ENCODE measurements at regions of chr7 and their contacts with region 1.

Region 1: DNA sequence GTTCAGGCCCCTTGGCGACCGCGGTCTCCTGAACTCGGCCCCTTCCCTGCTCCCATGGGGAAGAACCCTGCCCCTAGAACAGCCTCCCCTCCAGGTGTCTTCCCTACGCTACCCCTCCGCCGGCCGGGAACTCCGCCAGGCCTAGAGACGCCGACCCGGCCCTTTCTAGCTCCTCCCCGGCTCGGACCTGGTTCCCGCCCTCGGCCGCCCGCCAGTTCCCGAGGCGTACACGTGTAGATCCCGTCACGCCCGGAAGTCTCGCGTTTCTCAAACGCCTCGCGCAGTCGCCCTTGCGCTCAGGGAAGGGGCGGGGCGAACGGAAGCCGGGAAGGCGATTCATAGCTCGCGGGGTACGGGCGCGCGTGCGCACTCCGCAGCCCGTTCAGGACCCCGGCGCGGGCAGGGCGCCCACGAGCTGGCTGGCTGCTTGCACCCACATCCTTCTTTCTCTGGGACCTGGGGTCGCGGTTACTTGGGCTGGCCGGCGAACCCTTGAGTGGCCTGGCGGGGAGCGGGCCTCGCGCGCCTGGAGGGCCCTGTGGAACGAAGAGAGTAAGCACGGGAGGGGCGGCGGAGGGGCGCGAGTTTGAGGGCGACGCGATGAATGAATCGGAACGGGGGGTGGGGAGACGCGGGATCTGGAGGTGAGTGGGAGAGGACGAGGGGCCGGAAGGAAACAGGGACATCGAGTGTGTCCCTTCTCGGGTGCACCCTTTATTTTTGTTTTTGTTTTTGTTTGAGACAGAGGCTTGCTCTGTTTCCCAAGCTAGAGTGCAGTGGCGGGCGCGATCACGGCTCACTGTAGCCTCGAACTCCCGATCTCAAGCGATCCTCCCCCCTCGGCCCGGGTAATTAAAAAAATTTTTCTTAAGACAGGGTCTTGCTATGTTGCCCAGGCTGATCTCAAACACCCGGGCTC is at the start of gene POP7:
- H3K4me3 ChIP-seq: peak within 1 kb of the TSS; percentile 92
- H3K27ac ChIP-seq: peak within 1 kb of the TSS; percentile 87
- H3K4me1 ChIP-seq: no peaks in the 10 kb centered on the region
- CTCF ChIP-seq: no peak

Region 2: DNA sequence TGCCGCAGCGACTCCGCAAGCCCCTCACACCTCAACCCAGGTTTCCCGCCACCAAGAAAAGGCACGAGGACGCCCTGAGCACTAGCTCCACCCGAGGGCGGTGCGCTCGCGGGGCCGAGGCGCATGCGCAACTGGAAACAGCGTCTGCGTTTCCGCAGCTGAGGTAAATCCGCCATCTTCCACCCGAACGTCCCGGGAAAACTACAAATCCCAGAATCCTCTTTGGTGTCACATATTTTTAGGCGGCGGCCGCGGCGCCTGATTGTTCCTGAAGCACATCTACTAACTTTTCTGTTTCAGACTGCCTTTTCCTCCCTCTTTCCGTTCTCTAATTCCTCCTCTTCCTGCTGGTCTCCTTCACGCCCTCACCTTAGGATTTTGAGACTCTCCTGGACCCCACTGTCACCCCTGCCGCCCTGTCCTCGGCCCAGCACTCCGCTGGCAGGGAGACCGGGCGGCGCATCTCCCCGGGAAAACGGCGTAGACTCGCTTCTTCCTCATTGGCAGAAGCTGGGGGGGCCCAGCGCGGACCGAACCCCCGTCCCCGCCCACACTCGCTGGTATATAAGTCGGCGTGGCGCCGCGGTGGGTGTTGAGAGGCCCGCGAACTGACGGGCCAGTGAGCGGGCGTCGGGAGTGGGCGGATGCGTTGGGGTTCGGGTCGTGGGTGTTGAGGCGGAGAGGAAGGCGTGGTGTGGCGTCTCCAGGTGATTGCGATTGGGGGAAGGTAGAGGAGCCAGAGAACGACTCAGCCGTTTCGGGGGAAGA is 277.6 kb before region 1 on chr7 and contains the start of gene ZCWPW1:
- CTCF ChIA-PET with region 1: interaction called, 3 read pairs
- POLR2A ChIA-PET with region 1: interaction called, 10 read pairs
- H3K4me3 ChIP-seq: peak within 1 kb of the TSS; percentile 83
- H3K27ac ChIP-seq: peak within 1 kb of the TSS; percentile 97
- H3K4me1 ChIP-seq: peaks cover 4% of the 10 kb centered on the region
- CTCF ChIP-seq: peak; percentile 28; the same call in 1 of the 2 replicates

Region 3: GRCh38 chr7:100691676-100692577 is 14.1 kb before region 1 on chr7:
- CTCF ChIA-PET with region 1: interaction called, 42 read pairs
- POLR2A ChIA-PET with region 1: interaction called, 15 read pairs
- H3K4me3 ChIP-seq: peak overlapping the region; percentile 6; the same call in 1 of the 2 replicates
- H3K27ac ChIP-seq: peak overlapping the region; percentile 25; the same call in 1 of the 2 replicates
- H3K4me1 ChIP-seq: peaks cover 2% of the 10 kb centered on the region; the same call in 1 of the 2 replicates
- CTCF ChIP-seq: peak; percentile 93

Region 4: DNA sequence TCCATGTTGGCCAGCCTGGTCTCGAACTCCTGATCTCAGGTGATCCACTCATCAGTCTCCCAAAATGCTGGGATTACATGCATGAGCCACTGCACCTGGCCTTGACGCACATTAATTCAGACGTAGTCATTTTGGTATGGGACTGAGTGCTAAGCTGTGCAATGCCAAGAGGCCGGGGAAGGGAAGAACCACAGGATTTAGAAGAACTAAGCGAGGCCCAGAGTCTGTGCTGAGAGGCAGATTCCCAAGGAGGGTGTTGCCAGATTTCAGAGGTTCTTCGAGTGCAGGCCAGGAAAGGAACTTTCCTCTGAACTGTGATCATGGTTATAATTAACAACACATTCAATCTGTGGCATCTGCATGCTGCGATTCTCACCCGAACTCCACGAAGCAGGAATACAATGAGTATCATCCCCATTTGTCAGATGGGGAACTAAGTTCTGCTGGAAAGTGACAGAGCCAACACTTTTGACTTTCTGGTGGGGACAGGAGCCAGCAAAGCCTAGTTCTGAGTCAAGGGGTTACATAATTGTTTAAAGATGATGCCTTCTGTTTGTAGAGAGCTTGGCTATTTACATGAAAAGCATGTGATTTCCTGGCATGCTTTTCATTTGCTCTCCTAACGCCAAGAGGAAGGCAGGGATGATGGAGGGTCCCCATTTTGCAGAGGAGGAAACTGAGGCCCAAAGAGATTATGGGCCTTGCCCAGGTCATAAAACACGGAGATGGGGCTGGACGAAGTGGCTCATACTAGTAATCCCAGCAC is 21.2 kb after region 1 on chr7:
- CTCF ChIA-PET with region 1: interaction called, 100 read pairs
- POLR2A ChIA-PET with region 1: interaction called, 22 read pairs
- H3K4me3 ChIP-seq: no peak overlapping the region
- H3K27ac ChIP-seq: no peak overlapping the region
- H3K4me1 ChIP-seq: no peaks in the 10 kb centered on the region
- CTCF ChIP-seq: no peak

Region 5: DNA sequence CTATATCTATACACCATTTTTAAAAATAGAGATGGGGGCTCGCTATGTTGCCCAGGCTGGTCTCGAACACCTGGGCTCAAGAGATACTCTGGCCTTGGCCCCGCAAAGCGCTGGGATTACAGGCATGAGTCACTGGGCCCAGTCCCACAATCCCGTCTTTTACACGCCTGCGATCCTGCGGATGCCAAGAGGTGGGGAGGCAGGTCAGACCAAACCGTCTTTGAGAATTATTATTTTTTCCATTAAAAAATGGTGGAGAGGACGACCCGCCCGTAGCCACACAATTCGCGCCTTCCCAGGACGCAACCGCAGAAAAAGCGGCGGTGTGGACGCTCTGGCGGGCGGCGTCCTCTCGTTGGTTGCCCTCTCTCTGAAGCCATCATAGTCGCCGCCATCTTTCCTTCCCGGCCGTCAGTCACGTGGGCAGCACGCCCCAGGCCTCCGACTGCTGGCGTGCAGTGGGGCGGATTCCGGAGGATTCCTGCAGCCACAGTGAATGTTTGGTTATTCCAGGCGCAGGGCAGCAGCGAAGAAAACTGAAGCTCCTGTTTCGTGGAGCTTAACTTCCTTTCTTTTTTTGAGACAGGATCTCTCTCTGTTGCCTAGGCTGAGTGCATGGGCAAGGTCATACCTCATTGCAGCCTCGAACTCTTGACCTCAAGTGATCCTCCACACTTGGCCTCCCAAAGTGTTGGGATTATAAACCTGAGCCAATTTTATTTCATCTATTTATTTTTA is 131.3 kb after region 1 on chr7:
- CTCF ChIA-PET with region 1: interaction called, 9 read pairs
- POLR2A ChIA-PET with region 1: interaction called, 12 read pairs
- H3K4me3 ChIP-seq: peak overlapping the region; percentile 28
- H3K27ac ChIP-seq: peak overlapping the region; percentile 91
- H3K4me1 ChIP-seq: peaks cover 9% of the 10 kb centered on the region
- CTCF ChIP-seq: no peak

Region 6: GRCh38 chr7:100874577-100875355 is 168.8 kb after region 1 on chr7 and contains the start of gene SRRT:
- CTCF ChIA-PET with region 1: no interaction called
- POLR2A ChIA-PET with region 1: interaction called, 21 read pairs
- H3K4me3 ChIP-seq: peak within 1 kb of the TSS; percentile 68
- H3K27ac ChIP-seq: peak within 1 kb of the TSS; percentile 78
- H3K4me1 ChIP-seq: no peaks in the 10 kb centered on the region
- CTCF ChIP-seq: peak; percentile 78

Region 7: GRCh38 chr7:100914879-100915447 is 209.0 kb after region 1 on chr7:
- CTCF ChIA-PET with region 1: no interaction called
- POLR2A ChIA-PET with region 1: no interaction called
- H3K4me3 ChIP-seq: no peak overlapping the region
- H3K27ac ChIP-seq: no peak overlapping the region
- H3K4me1 ChIP-seq: no peaks in the 10 kb centered on the region
- CTCF ChIP-seq: no peak